Heart right ventricle (tissue), 16 donors: ENCODE measurements at regions of chr3 and their contacts with region 1.

Region 1: DNA sequence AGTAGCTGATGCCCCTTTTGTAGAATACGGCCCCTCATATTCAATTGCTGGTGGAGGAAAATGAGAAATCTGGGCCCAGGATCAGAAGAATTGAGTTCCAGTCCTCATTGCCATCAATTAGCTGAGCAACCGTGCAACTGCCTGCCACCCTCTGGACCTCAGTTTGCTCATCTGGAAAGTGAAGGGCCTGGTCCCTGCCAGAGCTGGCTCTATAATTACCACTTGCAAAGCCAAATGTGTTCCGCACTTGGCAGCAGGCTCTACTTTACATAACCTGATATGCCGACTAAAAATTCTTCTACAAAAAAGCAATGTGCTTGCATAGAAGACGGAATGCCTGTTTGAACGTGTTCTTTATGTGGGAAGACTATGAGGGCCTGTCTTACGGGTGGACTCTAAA is 8.6 kb upstream of the ITGB5 start:
- DNase-seq: no peak
- ATAC-seq: peak in 4 of 8 donors; percentile 40 to 69 (median 45)
- H3K4me3 ChIP-seq: no peak overlapping the region
- H3K27ac ChIP-seq: no peak overlapping the region
- H3K4me1 ChIP-seq: peaks cover 0 to 21% (median 7%) of the 10 kb centered on the region in 9 donors
- H3K27me3 ChIP-seq: no peaks in the 10 kb centered on the region
- CTCF ChIP-seq: no peak

Region 2: GRCh38 chr3:124786441-124787241 is 109.1 kb before region 1 on chr3:
- intact Hi-C with region 1: loop called in 3 of 10 experiments (anchors 1 to 5 kb)
- DNase-seq: no peak
- ATAC-seq: peak; percentile 6 to 64 (median 47)
- H3K4me3 ChIP-seq: no peak overlapping the region
- H3K27ac ChIP-seq: peak overlapping the region; percentile 28 to 80 (median 70)
- H3K4me1 ChIP-seq: peaks cover 35 to 83% (median 69%) of the 10 kb centered on the region in 9 donors
- H3K27me3 ChIP-seq: no peaks in the 10 kb centered on the region
- CTCF ChIP-seq: peak in 8 of 9 donors; percentile 23 to 68 (median 51)

Region 3: GRCh38 chr3:124972463-124972862 is 76.7 kb after region 1 on chr3:
- intact Hi-C with region 1: no loop called
- DNase-seq: no peak
- ATAC-seq: no peak
- H3K4me3 ChIP-seq: no peak overlapping the region
- H3K27ac ChIP-seq: no peak overlapping the region
- H3K4me1 ChIP-seq: peaks cover 0 to 25% (median 0%) of the 10 kb centered on the region in 9 donors
- H3K27me3 ChIP-seq: no peaks in the 10 kb centered on the region
- CTCF ChIP-seq: no peak

Region 4: DNA sequence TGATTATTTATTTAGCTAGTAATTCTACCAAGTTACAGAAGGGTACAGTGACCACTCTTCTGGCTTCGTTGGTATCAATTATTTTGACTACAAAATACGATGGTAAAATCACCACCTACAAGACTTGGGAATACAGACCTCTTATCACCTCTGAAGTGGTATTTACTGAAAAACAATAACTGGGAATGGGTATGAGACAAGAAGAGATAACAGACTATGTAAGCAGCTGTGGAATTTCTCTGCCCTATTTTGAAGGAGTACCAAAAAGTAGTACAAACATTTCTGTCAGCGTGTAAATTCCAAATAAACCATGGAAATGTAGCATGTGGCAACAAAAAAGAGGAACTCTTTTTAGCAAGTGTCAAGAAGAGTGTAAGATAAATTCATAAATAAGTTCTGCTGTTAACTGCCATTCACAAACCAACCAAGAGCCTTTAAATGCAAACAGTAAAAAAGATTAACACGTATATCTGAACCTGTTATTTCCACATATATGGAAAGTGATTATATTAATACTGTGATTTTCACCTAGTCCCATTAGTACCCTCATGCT is 393.7 kb after region 1 on chr3:
- intact Hi-C with region 1: no loop called
- DNase-seq: no peak
- ATAC-seq: no peak
- H3K4me3 ChIP-seq: no peak overlapping the region
- H3K27ac ChIP-seq: no peak overlapping the region
- H3K4me1 ChIP-seq: peaks cover 0 to 39% (median 16%) of the 10 kb centered on the region in 9 donors
- H3K27me3 ChIP-seq: no peaks in the 10 kb centered on the region
- CTCF ChIP-seq: no peak